ENCODE measurements at regions of chr5 and their contacts with region 1.

Region 1: DNA sequence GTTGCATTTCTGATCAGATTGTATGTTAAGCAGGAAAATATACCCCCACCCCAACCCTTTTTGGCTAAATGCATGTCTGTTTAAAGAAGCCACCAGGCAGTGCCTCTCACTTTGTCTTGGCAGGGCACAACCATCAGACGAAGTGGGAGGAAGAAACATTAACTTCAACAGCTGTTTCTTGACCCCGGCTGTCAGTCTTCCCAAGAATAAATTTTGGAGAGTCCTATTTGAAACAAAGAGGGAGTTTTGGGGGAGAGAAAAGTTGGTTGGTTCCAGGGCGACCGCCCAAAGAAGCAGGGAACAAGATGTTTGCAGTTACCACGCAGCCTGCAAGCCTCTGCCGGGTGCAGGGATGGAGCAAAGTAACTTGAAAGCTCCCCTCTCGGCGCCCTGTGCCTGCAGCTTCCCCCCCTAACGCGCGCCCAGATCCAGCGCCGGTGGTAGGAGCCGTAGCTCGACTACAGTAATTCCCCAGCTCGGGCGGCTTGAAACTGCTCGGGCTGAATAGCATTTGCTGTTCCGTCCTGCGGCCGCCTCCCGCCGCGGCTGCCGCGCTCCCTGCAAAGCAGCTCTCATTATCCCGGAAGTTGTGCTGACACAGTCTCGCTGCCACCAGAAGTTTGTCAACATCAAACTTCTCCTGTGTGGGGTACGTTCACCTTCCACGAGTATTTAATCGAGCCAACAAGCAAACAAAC is 100.7 kb upstream of the SSBP2 start:
- DNase-seq: peak; percentile 95
- H3K27ac ChIP-seq: peak overlapping the region; percentile 94
- CTCF ChIP-seq: no peak

Region 2: GRCh38 chr5:81751009-81751835 is 100.4 kb before region 1 on chr5 and contains the start of gene SSBP2:
- CTCF ChIA-PET with region 1: interaction called, 8 read pairs
- POLR2A ChIA-PET with region 1: interaction called, 43 read pairs
- DNase-seq: peak; percentile 97
- H3K27ac ChIP-seq: peak within 1 kb of the TSS; percentile 97
- CTCF ChIP-seq: no peak